ENCODE measurements at regions of chr3 and their contacts with region 1.

Region 1: DNA sequence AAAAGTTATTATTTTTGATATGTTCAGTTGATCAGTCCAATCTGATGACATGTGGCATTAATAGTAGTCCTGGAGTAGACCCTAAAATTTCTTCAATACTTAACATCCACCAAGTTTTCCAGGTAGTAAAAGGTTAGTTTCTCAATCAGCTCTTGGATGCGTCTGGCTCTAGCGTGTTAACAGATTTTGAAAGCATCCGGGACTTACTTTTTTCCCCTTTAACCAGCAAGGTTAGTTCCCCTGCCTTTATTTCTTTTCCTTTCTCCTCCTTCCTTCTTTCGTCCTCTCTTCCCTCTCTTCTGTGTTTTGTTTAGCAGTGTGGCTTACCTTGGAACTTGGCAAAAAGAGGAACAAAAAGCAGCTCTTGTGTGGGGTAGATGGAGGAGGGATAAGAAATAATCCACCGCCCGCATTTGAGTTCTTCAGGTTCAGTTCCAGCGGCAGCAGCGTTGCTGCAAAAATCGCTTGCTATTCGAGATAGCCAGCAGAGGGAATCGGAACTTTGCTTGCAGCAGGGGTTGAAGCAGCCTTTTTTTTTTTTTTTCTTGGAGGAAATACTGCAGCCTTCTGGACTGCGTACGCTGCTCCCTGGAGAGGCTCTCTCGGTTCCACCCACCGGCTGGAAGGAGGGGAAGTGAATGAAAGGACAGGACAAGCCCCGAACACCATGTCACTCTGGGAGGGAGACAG is at the start of gene RBMS3:
- DNase-seq: peak; percentile 97
- ATAC-seq: peak; percentile 82
- H3K4me3 ChIP-seq: peak within 1 kb of the TSS; percentile 91
- H3K27ac ChIP-seq: peak within 1 kb of the TSS; percentile 95
- H3K4me1 ChIP-seq: peaks cover 7% of the 10 kb centered on the region
- H3K27me3 ChIP-seq: no peaks in the 10 kb centered on the region
- CTCF ChIP-seq: peak; percentile 65
- POLR2A ChIP-seq: peak; percentile 79; the same call in 1 of the 2 replicates
- RAD21 ChIP-seq: peak; percentile 73
- total RNA-seq, gene RBMS3: 110 and 127 TPM in 2 replicates

Region 2: DNA sequence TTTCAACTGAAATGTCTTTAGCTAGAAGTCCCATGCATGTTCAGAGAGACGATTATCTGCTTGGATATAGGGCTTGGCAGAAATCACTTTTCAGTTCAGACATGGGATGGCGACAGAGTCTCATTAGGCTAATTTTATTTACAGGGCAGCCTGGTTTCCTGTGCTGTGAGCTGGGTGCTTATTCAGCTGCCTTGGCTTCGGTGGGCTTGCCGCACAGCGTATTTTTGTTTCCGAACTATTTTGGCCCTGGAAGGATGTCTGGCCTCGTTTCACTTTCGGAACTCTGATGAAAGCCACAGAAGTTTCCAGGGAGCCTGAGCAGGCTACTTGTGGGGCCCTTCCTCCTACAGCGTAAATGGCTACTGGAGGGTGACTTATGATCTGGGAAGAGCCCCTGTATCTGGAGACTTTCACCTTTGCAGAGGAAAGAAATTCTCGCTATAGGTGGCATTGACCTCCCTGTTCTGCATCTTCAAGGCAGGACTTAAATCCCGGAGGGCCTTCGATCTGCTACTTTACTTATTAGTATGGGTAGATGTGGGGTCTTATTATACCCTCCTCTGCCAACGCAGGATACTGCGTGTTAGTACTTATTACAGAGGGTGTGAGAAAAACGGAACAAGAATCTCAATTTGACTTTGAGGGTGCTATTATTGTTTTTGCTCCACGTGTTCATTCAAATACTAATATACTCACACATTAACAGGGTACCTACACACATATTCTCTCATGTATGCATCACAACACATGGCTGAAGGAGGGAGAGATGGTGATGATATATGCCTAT is 363.6 kb before region 1 on chr3:
- CTCF ChIA-PET with region 1: interaction called, 9 read pairs
- POLR2A ChIA-PET with region 1: interaction called, 3 read pairs
- dilution Hi-C with region 1: no loop called
- in situ Hi-C with region 1: loop called (anchors 10 kb)
- intact Hi-C with region 1: loop called (anchors 1 kb)
- DNase-seq: peak; percentile 65
- ATAC-seq: peak; percentile 66
- H3K4me3 ChIP-seq: peak overlapping the region; percentile 38
- H3K27ac ChIP-seq: peak overlapping the region; percentile 53
- H3K4me1 ChIP-seq: peaks cover 4% of the 10 kb centered on the region
- H3K27me3 ChIP-seq: no peaks in the 10 kb centered on the region
- CTCF ChIP-seq: peak; percentile 49
- POLR2A ChIP-seq: no peak
- RAD21 ChIP-seq: peak; percentile 70

Region 3: DNA sequence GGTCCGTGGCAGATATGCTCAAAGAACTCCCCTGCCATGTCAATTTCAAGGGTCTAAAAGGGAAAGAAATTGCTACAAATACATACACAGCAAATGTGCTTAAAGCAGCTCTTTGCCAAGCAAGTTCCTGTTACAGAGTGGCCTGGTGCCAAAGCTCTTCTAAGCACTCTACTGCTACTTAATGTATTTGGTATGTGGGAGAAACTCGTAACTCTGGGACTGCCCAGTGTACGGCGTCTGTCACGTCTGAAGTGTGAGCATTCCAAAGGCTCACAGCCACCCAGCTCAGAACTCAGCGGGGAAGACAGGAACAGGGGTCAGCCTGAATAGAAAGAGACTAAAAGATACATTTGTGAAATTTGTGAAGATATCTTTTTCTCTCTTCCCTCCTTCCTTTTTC is 54.9 kb after region 1 on chr3:
- CTCF ChIA-PET with region 1: interaction called, 4 read pairs
- POLR2A ChIA-PET with region 1: interaction called, 3 read pairs
- dilution Hi-C with region 1: no loop called
- in situ Hi-C with region 1: no loop called
- intact Hi-C with region 1: loop called (anchors 2 kb)
- DNase-seq: peak; percentile 98
- ATAC-seq: peak; percentile 98
- H3K4me3 ChIP-seq: peak overlapping the region; percentile 26
- H3K27ac ChIP-seq: peak overlapping the region; percentile 74
- H3K4me1 ChIP-seq: peaks cover 8% of the 10 kb centered on the region
- H3K27me3 ChIP-seq: no peaks in the 10 kb centered on the region
- CTCF ChIP-seq: no peak
- POLR2A ChIP-seq: peak; percentile 66
- RAD21 ChIP-seq: no peak

Region 4: GRCh38 chr3:29605845-29606244 is 325.3 kb after region 1 on chr3:
- CTCF ChIA-PET with region 1: no interaction called
- POLR2A ChIA-PET with region 1: no interaction called
- dilution Hi-C with region 1: no loop called
- in situ Hi-C with region 1: no loop called
- intact Hi-C with region 1: loop called (anchors 5 kb)
- DNase-seq: peak; percentile 94
- ATAC-seq: peak; percentile 92
- H3K4me3 ChIP-seq: no peak overlapping the region
- H3K27ac ChIP-seq: peak overlapping the region; percentile 88; the same call in 1 of the 2 replicates
- H3K4me1 ChIP-seq: peaks cover 3% of the 10 kb centered on the region; the same call in 1 of the 2 replicates
- H3K27me3 ChIP-seq: no peaks in the 10 kb centered on the region
- CTCF ChIP-seq: no peak
- POLR2A ChIP-seq: no peak
- RAD21 ChIP-seq: no peak

Region 5: DNA sequence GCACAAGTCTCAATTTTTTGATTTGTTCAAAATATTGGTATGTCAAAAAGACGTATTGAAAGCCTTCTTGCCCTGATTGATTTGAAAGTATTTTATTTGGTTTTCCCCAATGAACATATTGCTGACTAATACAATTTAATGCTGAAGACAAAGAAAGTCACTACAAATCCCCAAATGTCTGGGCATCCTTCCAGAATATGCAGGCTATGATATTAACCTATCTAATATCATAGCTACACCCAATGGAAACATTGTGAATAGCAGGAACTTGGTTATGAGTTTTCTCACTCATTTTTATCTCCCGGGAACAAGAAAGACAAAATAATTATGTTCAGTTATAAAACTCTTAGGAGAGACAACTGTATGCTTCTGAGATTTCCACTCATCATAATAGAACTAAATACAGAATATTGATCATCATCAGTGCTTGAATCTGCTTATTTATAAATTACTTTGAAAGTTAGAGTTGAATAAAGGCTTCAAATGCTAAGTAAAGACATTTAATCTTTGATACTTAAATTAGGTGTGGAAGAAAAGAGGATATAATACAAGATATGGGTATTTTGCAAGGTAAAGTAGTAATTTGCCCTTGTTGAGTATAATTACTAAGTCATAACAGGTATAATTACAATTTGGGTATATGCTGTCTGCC is 484.2 kb after region 1 on chr3:
- CTCF ChIA-PET with region 1: no interaction called
- POLR2A ChIA-PET with region 1: no interaction called
- dilution Hi-C with region 1: no loop called
- in situ Hi-C with region 1: loop called (anchors 10 kb)
- intact Hi-C with region 1: loop called (anchors 1 kb)
- DNase-seq: peak; percentile 89
- ATAC-seq: peak; percentile 57
- H3K4me3 ChIP-seq: no peak overlapping the region
- H3K27ac ChIP-seq: no peak overlapping the region
- H3K4me1 ChIP-seq: peaks cover 2% of the 10 kb centered on the region
- H3K27me3 ChIP-seq: no peaks in the 10 kb centered on the region
- CTCF ChIP-seq: peak; percentile 76
- POLR2A ChIP-seq: no peak
- RAD21 ChIP-seq: peak; percentile 78